ENCODE measurements at regions of chr19 and their contacts with region 1.

Region 1: GRCh38 chr19:55653758-55654539 is 886 bp upstream of the U2AF2 start:
- DNase-seq: peak; percentile 100
- H3K4me3 ChIP-seq: peak overlapping the region; percentile 86 to 87
- H3K4me3 Mint-ChIP-seq: peak overlapping the region; percentile 92 to 99 (median 94)
- H3K27ac ChIP-seq: peak overlapping the region; percentile 99
- H3K27ac Mint-ChIP-seq: peak overlapping the region; percentile 96 to 100 (median 98)
- H3K4me1 ChIP-seq: peaks cover 42% of the 10 kb centered on the region
- H3K4me1 Mint-ChIP-seq: peaks cover 19 to 58% (median 32%) of the 10 kb centered on the region in 4 donors
- H3K27me3 ChIP-seq: no peaks in the 10 kb centered on the region
- H3K27me3 Mint-ChIP-seq: no peaks in the 10 kb centered on the region

Region 2: DNA sequence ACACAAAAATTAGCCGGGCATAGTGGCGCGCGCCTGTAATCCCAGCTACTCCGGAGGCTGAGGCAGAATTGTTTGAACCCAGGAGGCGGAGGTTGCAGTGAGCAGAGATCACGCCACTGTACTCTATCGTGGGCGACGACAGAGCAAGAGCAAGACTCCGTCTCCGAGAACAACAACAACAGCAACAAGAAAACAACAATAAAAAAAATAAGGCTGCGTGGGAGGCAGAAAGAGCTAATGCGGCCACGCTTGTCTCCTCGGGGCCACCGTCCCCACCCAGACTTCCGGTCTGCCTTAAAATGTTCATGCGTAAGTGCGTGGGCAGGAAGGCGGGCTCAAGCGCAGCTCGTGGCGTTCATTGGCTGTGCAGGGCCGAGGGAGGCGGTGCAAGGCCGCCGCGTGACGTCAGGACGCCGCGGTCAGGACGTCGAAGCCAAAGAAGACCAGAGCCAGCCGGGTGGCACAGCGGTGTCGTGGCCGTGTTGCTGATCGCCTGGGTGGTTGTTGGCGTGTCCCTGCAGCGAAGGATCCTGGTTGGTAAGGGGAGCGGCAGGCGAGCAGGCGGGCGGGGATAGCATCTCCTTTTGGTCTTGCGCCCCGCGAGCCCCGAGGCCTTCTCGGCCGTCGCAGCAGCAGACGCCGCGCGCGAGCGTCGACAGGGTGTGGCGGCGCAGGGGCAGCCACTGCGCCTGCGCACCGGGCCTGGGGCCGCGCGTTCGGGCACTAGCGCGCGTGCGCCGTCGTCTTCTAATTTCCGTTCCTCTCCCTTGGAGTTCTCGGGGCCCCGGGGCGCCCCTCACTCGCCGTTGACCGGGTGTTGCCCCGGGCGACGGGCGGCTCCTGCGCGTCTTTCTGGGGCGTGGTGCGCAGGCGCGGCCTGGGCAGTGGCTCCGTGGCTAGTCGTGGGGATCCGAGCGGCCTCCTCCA is 1204.9 kb before region 1 on chr19 and contains the start of gene LENG8:
- CTCF ChIA-PET with region 1: no interaction called
- POLR2A ChIA-PET with region 1: interaction called, 4 read pairs
- intact Hi-C with region 1: loop called (anchors 10 kb)
- DNase-seq: peak; percentile 98 to 99 (median 99)
- H3K4me3 ChIP-seq: peak within 1 kb of the TSS; percentile 75 to 98
- H3K4me3 Mint-ChIP-seq: peak within 1 kb of the TSS; percentile 91 to 100 (median 98)
- H3K27ac ChIP-seq: peak within 1 kb of the TSS; percentile 93
- H3K27ac Mint-ChIP-seq: peak within 1 kb of the TSS; percentile 96 to 100 (median 99)
- H3K4me1 ChIP-seq: peaks cover 46% of the 10 kb centered on the region
- H3K4me1 Mint-ChIP-seq: peaks cover 25 to 69% (median 41%) of the 10 kb centered on the region in 4 donors
- H3K27me3 ChIP-seq: no peaks in the 10 kb centered on the region
- H3K27me3 Mint-ChIP-seq: peaks cover 0 to 3% of the 10 kb centered on the region in 2 donors
- total RNA-seq, gene LENG8: 535 to 565 TPM

Region 3: GRCh38 chr19:55279770-55280643 is 373.9 kb before region 1 on chr19 and contains the start of gene HSPBP1:
- CTCF ChIA-PET with region 1: no interaction called
- POLR2A ChIA-PET with region 1: interaction called, 6 read pairs
- intact Hi-C with region 1: loop called (anchors 2 kb)
- DNase-seq: peak; percentile 96 to 97 (median 97)
- H3K4me3 ChIP-seq: peak within 1 kb of the TSS; percentile 95 to 98
- H3K4me3 Mint-ChIP-seq: peak within 1 kb of the TSS; percentile 92 to 100 (median 98)
- H3K27ac ChIP-seq: peak within 1 kb of the TSS; percentile 69
- H3K27ac Mint-ChIP-seq: peak within 1 kb of the TSS; percentile 87 to 100 (median 100)
- H3K4me1 ChIP-seq: peaks cover 39% of the 10 kb centered on the region
- H3K4me1 Mint-ChIP-seq: peaks cover 24 to 55% (median 34%) of the 10 kb centered on the region in 4 donors
- H3K27me3 ChIP-seq: no peaks in the 10 kb centered on the region
- H3K27me3 Mint-ChIP-seq: no peaks in the 10 kb centered on the region
- total RNA-seq, gene HSPBP1: 17.9 to 18.5 TPM

Region 4: DNA sequence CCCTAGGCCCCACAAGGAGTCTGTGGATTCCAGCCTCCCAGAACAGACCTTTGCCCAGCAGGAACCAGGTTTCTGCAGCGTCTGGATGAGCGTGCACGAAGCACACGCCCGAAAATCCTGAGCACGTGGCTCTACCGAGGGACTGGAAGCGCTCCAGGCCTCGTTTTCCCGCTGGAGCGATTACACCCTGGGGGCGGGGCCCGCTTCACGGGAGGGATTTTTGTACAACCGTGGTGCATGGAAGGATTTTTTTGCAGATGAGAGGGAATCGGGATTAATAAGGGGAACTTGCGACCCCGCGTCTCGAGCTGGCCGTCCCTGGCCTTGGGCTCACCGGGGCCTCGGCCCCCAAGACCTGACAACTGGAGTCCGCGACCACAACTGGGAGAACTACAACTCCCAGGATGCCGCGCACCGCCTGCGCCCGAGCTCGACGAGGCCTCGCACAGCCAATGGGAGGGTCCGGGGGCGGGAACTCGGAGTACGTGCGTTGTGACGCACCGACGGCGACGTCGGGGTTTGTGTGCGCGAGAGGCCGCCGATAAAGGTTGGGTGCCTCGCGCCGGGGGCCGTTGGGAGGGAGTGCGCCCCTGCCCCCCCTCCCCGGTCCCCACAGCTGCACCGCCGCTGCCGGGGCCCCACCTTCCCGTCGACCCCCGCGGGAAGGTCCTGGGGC is 177.7 kb before region 1 on chr19 and contains the start of gene ZNF628:
- CTCF ChIA-PET with region 1: no interaction called
- POLR2A ChIA-PET with region 1: interaction called, 12 read pairs
- intact Hi-C with region 1: no loop called
- DNase-seq: peak; percentile 97 to 98 (median 97)
- H3K4me3 ChIP-seq: peak within 1 kb of the TSS; percentile 65 to 84
- H3K4me3 Mint-ChIP-seq: peak within 1 kb of the TSS; percentile 88 to 93 (median 90)
- H3K27ac ChIP-seq: peak within 1 kb of the TSS; percentile 71
- H3K27ac Mint-ChIP-seq: peak within 1 kb of the TSS; percentile 90 to 97 (median 94)
- H3K4me1 ChIP-seq: peaks cover 22% of the 10 kb centered on the region
- H3K4me1 Mint-ChIP-seq: peaks cover 19 to 42% (median 29%) of the 10 kb centered on the region in 4 donors
- H3K27me3 ChIP-seq: no peaks in the 10 kb centered on the region
- H3K27me3 Mint-ChIP-seq: no peaks in the 10 kb centered on the region
- total RNA-seq, gene ZNF628: 8.1 to 9.1 TPM

Region 5: GRCh38 chr19:55591555-55591954 is 62.4 kb before region 1 on chr19:
- CTCF ChIA-PET with region 1: no interaction called
- POLR2A ChIA-PET with region 1: no interaction called
- intact Hi-C with region 1: no loop called
- DNase-seq: no peak
- H3K4me3 ChIP-seq: no peak overlapping the region
- H3K4me3 Mint-ChIP-seq: peak overlapping the region in 1 of 8 donors; percentile 18
- H3K27ac ChIP-seq: no peak overlapping the region
- H3K27ac Mint-ChIP-seq: no peak overlapping the region
- H3K4me1 ChIP-seq: peaks cover 19% of the 10 kb centered on the region
- H3K4me1 Mint-ChIP-seq: peaks cover 8 to 24% (median 18%) of the 10 kb centered on the region in 4 donors
- H3K27me3 ChIP-seq: no peaks in the 10 kb centered on the region
- H3K27me3 Mint-ChIP-seq: no peaks in the 10 kb centered on the region

Region 6: DNA sequence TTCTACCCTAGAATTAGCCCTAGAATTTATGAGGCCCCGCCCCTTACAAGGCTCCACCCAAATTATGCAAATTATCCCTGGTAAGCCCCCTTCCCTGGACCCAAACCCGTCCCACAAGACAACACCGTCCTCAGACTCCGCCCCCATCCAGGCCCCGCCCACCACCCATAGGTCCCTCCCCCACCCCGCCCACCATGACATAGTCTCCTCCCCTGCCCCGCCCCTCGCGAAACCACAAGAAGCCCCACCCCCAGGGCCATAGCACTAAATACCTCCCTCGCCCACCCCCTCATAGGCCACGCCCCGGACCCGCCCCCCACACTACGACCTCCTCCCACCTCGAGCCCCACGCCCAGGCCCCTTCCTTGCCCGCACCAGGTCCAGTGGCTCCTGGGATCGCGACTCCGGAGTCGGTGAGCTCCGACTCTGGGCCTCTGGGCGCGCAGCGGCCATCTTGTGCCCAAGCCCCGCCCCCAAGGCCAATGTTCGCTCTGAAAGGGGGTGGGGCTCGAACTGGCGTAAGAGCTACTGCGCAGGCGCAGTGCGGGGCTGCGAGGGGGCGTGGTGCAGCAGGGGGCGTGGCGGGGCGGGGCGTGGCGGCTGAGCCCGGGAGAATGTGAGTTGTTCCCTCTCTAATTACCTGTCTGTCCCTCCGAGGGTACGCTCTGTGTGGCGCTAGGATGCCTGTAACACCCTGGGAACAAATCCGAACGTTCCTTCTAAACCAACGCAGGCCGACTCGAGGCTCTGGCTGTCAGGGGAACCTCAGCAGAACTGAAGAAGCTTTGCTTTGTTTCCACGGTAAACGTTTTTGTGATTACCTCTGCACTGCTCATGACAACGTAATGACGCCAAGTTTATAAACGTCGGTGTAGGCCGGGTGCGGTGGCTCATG is 29.6 kb before region 1 on chr19 and contains the start of gene ZNF784:
- CTCF ChIA-PET with region 1: interaction called, 4 read pairs
- POLR2A ChIA-PET with region 1: interaction called, 11 read pairs
- intact Hi-C with region 1: loop called (anchors 1 kb)
- DNase-seq: peak; percentile 90 to 94 (median 93)
- H3K4me3 ChIP-seq: peak within 1 kb of the TSS; percentile 57 to 64
- H3K4me3 Mint-ChIP-seq: peak within 1 kb of the TSS; percentile 88 to 96 (median 90)
- H3K27ac ChIP-seq: peak within 1 kb of the TSS; percentile 88
- H3K27ac Mint-ChIP-seq: peak within 1 kb of the TSS; percentile 96 to 99 (median 98)
- H3K4me1 ChIP-seq: peaks cover 38% of the 10 kb centered on the region
- H3K4me1 Mint-ChIP-seq: peaks cover 30 to 57% (median 42%) of the 10 kb centered on the region in 4 donors
- H3K27me3 ChIP-seq: no peaks in the 10 kb centered on the region
- H3K27me3 Mint-ChIP-seq: no peaks in the 10 kb centered on the region
- total RNA-seq, gene ZNF784: 7.4 TPM

Region 7: DNA sequence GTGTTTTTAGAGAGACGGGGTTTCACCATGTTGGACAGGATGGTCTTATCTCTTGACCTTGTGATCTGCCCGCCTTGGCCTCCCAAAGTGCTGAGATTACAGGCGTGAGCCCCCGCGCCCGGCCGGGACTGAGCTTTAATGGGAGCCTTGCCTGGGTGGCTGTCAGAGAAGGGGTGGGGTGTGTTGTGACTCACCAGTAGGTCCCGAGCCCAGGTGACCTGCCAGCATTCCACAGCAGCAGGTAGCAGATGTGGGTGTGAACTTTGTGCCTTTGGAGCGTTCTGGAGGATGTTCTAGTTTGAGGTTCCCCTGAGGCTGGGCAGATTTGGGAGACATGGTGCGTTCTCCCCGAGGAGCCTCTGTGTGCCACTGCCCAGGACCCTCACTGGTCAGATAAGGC is 14.0 kb after region 1 on chr19:
- CTCF ChIA-PET with region 1: interaction called, 11 read pairs
- POLR2A ChIA-PET with region 1: interaction called, 19 read pairs
- intact Hi-C with region 1: no loop called
- DNase-seq: no peak
- H3K4me3 ChIP-seq: no peak overlapping the region
- H3K4me3 Mint-ChIP-seq: no peak overlapping the region
- H3K27ac ChIP-seq: no peak overlapping the region
- H3K27ac Mint-ChIP-seq: no peak overlapping the region
- H3K4me1 ChIP-seq: peaks cover 22% of the 10 kb centered on the region
- H3K4me1 Mint-ChIP-seq: peaks cover 7 to 65% (median 19%) of the 10 kb centered on the region in 4 donors
- H3K27me3 ChIP-seq: no peaks in the 10 kb centered on the region
- H3K27me3 Mint-ChIP-seq: no peaks in the 10 kb centered on the region

Region 8: DNA sequence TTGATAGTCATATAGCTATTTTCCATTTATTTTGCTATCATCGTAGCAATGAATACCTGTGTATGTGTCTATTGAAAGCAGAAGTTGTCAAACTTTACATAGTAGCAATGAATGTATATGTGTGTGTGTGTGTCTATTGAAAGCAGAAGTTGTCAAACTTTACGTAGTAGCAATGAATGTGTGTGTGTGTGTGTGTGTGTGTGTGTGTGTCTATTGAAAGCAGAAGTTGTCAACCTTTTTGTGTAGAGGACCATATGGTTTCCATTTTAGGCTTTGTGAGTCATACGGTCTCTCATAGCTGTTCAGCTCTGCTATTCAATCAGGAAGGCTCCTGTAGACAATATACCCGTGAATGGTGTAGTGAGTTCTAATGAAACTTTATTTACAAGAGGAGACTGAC is 203.2 kb after region 1 on chr19:
- CTCF ChIA-PET with region 1: no interaction called
- POLR2A ChIA-PET with region 1: no interaction called
- intact Hi-C with region 1: no loop called
- DNase-seq: no peak
- H3K4me3 ChIP-seq: no peak overlapping the region
- H3K4me3 Mint-ChIP-seq: peak overlapping the region in 2 of 8 donors; percentile 8 to 11
- H3K27ac ChIP-seq: no peak overlapping the region
- H3K27ac Mint-ChIP-seq: no peak overlapping the region
- H3K4me1 ChIP-seq: no peaks in the 10 kb centered on the region
- H3K4me1 Mint-ChIP-seq: no peaks in the 10 kb centered on the region
- H3K27me3 ChIP-seq: no peaks in the 10 kb centered on the region
- H3K27me3 Mint-ChIP-seq: no peaks in the 10 kb centered on the region